Right ventricle myocardium superior (tissue), 1 donor: ENCODE measurements at regions of chr9 and their contacts with region 1.

Region 1: DNA sequence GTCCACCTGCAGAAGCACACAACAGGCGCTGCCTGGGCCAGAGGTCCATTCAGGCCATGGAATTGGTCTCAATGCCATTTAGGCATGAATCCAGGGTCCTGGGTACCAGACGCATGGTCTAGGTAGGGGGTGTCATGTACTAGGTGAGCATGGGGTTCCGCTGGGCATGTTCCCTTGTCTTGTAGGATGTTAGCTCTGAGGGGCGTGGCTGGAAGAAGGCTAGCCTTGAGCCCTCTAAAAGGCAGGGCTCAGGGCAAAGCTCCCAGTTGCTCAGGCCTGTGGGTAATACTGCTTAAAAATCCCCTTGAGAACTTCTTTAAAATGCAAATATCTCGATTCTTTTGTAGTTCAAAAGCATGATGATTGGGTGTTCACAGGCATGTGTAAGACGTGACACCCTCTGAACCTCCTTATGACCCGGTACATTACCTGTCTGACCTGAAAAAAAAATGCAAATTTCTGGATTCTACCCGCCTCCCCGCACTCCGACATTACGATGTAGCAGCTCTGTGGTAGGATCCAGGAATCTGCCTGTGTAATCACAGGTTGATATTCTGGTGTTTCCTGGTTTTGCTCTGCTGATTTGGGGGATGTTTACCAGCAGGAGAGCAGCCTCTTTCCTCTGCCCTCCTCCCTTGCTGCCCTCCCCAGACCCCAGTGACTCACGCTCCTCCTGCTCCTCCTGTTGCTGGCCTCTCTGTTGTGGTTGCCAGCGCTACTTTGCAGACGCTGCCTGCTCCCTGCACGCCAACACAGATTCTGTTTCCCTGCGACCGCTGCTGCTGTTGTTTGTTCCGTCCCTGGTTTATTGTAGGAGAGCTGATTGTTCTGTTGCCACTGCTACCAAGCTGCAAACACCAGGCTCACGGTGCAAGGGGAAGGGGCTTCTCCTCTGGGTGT is 5.7 kb downstream of the TMC1 start:
- DNase-seq: peak; percentile 73
- ATAC-seq: peak; percentile 92

Region 2: DNA sequence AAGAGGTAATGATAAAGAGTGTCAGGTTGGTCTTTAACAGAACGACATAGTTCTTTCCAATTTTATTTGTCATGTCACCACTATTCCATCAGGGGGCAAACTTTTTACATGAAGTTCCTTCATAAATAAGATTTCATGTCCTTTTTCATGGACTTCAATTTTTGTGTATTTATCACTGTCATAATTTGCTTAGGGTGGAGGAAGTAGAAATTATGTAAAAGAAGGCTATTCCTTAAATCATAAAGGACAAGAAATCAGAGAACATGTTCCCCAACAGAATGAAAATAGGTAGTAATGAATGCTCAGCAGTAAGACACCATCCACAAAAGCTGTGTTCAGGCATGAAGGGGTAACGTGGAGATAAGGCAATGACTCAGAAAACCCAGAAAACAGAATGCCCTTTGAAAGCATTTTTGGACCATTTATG is 234.9 kb before region 1 on chr9:
- intact Hi-C with region 1: loop called (anchors 10 kb)
- DNase-seq: no peak
- ATAC-seq: peak; percentile 63

Region 3: GRCh38 chr9:72623156-72623555 is 96.0 kb after region 1 on chr9:
- intact Hi-C with region 1: no loop called
- DNase-seq: no peak
- ATAC-seq: no peak

Region 4: DNA sequence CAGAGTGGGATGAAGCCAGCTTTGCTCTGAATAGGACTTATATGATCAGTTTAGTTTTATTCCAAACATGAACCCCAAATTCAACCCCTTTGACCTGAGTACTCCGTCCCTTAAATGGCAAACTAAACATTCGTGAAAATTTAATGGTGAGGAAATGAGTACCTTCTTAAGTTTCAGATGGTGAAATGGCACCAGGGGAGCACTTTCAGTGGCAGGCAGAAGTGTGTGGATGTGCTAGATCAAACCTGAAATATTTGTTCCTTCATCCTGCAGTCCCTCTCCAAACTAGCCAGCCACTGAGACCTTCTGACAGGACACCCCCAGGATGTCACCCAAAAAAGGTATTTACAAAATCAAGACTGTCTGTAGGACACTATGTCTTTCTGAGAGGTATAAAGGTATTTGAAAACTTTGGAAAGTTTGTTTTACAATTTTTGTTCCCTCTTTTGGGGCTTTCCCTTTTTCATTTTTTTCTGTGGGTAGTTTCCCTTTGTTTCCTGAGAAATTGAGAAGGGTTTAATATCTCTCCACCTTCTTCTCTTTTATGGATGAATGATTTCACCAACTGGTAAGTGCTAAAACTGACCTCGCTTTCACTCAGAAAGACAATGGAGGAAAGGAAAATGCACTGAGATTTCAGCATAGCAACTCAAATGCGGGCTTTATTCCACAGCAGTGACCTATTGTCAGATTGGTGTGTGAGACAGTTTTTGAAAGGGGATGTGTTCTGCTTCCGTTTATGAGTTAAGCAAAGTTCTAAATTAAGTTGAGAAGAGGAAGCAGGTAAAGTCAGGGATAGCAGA is 121.4 kb after region 1 on chr9:
- intact Hi-C with region 1: no loop called
- DNase-seq: no peak
- ATAC-seq: no peak